H1 (cell line): ENCODE measurements at regions of chr18 and their contacts with region 1.

Region 1: GRCh38 chr18:623761-624620 is 27.2 kb downstream of the CLUL1 start:
- DNase-seq: peak; percentile 36 to 79
- H3K4me3 ChIP-seq: no peak overlapping the region
- H3K27ac ChIP-seq: no peak overlapping the region
- H3K4me1 ChIP-seq: no peaks in the 10 kb centered on the region
- H3K27me3 ChIP-seq: no peaks in the 10 kb centered on the region
- CTCF ChIP-seq: peak; percentile 70 to 77 (median 76)
- EP300 ChIP-seq: no peak
- POLR2A ChIP-seq: no peak
- RAD21 ChIP-seq: peak; percentile 68 to 76

Region 2: DNA sequence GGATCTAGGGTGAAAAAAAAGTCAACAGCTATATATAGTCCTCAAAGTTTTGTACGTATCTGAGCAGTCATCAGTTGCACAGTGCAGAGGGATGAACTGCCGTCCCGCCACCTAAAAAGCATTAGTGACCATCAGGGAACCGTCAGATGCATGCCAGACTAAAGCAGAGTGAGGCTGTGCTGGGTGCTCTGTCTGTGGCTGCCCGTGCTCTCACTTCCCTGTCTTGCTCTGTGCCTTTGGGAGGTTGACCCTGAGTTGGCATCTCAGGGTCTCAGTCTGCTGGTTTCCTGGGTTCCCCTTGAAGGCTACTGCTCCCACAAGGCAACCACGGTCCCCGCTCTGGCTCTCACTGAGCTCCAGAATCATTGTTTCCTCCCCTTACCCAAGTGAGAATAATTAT is 16.1 kb before region 1 on chr18:
- CTCF ChIA-PET with region 1: interaction called, 29 read pairs
- POLR2A ChIA-PET with region 1: interaction called, 4 read pairs
- DNase-seq: no peak
- H3K4me3 ChIP-seq: no peak overlapping the region
- H3K27ac ChIP-seq: no peak overlapping the region
- H3K4me1 ChIP-seq: no peaks in the 10 kb centered on the region
- H3K27me3 ChIP-seq: no peaks in the 10 kb centered on the region
- CTCF ChIP-seq: no peak
- EP300 ChIP-seq: no peak
- POLR2A ChIP-seq: no peak
- RAD21 ChIP-seq: no peak

Region 3: GRCh38 chr18:641224-641623 is 17.2 kb after region 1 on chr18:
- CTCF ChIA-PET with region 1: interaction called, 24 read pairs
- POLR2A ChIA-PET with region 1: no interaction called
- DNase-seq: no peak
- H3K4me3 ChIP-seq: no peak overlapping the region
- H3K27ac ChIP-seq: no peak overlapping the region
- H3K4me1 ChIP-seq: peaks cover 0 to 2% (median 0%) of the 10 kb centered on the region in 4 experiments; a peak in 1 of 7 replicates
- H3K27me3 ChIP-seq: no peaks in the 10 kb centered on the region
- CTCF ChIP-seq: no peak
- EP300 ChIP-seq: no peak
- POLR2A ChIP-seq: no peak
- RAD21 ChIP-seq: no peak

Region 4: DNA sequence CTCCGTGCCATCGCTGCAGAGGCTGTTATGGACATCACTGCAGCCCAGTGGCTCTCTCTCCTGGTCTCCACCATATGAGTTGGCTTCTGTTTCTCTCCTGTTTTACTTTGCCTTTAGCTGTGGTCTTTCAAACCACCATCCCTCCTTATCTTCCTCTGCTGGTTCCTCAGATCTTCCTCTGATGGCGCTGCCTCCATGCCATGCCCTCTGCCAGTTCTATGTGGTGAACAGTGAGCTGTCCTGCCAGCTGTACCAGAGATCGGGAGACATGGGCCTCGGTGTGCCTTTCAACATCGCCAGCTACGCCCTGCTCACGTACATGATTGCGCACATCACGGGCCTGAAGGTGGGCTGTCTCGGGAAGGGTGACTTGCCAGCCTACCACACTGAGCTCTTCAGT is 46.5 kb after region 1 on chr18:
- CTCF ChIA-PET with region 1: interaction called, 10 read pairs
- POLR2A ChIA-PET with region 1: no interaction called
- DNase-seq: no peak
- H3K4me3 ChIP-seq: no peak overlapping the region
- H3K27ac ChIP-seq: no peak overlapping the region
- H3K4me1 ChIP-seq: no peaks in the 10 kb centered on the region
- H3K27me3 ChIP-seq: no peaks in the 10 kb centered on the region
- CTCF ChIP-seq: no peak
- EP300 ChIP-seq: no peak
- POLR2A ChIP-seq: no peak
- RAD21 ChIP-seq: no peak

Region 5: GRCh38 chr18:839224-840022 is 215.4 kb after region 1 on chr18:
- CTCF ChIA-PET with region 1: interaction called, 63 read pairs
- POLR2A ChIA-PET with region 1: no interaction called
- DNase-seq: peak; percentile 71 to 98
- H3K4me3 ChIP-seq: no peak overlapping the region
- H3K27ac ChIP-seq: no peak overlapping the region
- H3K4me1 ChIP-seq: no peaks in the 10 kb centered on the region
- H3K27me3 ChIP-seq: peaks cover 19 to 52% (median 42%) of the 10 kb centered on the region in 4 experiments
- CTCF ChIP-seq: peak; percentile 87 to 95 (median 88)
- EP300 ChIP-seq: peak in 1 of 2 experiments; percentile 13; a peak in 1 of 3 replicates
- POLR2A ChIP-seq: no peak
- RAD21 ChIP-seq: peak; percentile 80 to 85